ENCODE measurements at regions of chr12 and their contacts with region 1.

Region 1: GRCh38 chr12:75480469-75480949 is at the start of gene GLIPR1:
- DNase-seq: peak; percentile 72
- ATAC-seq: peak; percentile 85
- H3K4me3 ChIP-seq: peak within 1 kb of the TSS; percentile 83
- H3K27ac ChIP-seq: peak within 1 kb of the TSS; percentile 88
- H3K4me1 ChIP-seq: peaks cover 28% of the 10 kb centered on the region
- H3K27me3 ChIP-seq: no peaks in the 10 kb centered on the region
- CTCF ChIP-seq: no peak
- EP300 ChIP-seq: no peak; a peak in 1 of 4 replicates
- POLR2A ChIP-seq: peak; percentile 91
- RAD21 ChIP-seq: no peak
- polyA plus RNA-seq, gene GLIPR1: 39.8 to 62.6 TPM

Region 2: DNA sequence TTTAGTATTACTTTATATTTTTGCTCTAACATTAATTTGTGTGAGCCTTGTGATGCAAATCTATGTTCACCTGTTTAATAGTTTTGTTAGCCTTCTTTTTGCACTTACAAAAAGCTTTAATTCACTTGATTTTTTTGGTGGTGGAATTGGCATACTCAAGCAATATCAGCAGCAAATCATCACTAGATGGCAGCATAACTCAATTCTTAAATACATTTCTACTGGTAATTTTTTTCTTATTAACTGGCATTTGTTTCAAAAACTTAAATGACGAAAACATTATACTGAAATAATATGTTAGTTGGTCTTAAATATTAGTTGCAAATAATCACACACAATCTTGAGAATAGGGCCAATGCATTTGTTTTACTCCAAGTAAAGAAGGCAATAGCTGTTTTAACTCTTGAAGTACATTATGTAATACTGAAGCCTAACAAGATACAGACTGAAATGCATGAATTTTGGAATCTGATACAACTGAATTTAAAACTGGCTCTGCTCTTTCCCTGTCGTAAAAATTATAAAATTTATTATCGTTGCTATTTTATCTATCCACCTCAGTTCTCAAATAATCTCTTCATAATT is 791.3 kb before region 1 on chr12:
- CTCF ChIA-PET with region 1: interaction called, 7 read pairs
- POLR2A ChIA-PET with region 1: no interaction called
- RAD21 ChIA-PET with region 1: no interaction called
- SMC1A ChIA-PET with region 1: no interaction called
- in situ Hi-C with region 1: loop called (anchors 25 kb)
- intact Hi-C with region 1: no loop called
- DNase-seq: no peak
- ATAC-seq: peak; percentile 65; the same call in 2 of the 3 replicates
- H3K4me3 ChIP-seq: no peak overlapping the region
- H3K27ac ChIP-seq: no peak overlapping the region
- H3K4me1 ChIP-seq: no peaks in the 10 kb centered on the region
- H3K27me3 ChIP-seq: no peaks in the 10 kb centered on the region
- CTCF ChIP-seq: peak in 2 of 3 experiments; percentile 52 to 55; a peak in 3 of 6 replicates
- EP300 ChIP-seq: no peak
- POLR2A ChIP-seq: no peak
- RAD21 ChIP-seq: peak; percentile 52

Region 3: GRCh38 chr12:75390899-75391538 is 89.5 kb before region 1 on chr12 and contains the start of gene GLIPR1L2:
- CTCF ChIA-PET with region 1: interaction called, 58 read pairs
- POLR2A ChIA-PET with region 1: interaction called, 6 read pairs
- RAD21 ChIA-PET with region 1: interaction called, 56 read pairs
- SMC1A ChIA-PET with region 1: interaction called, 33 read pairs
- in situ Hi-C with region 1: no loop called
- intact Hi-C with region 1: loop called (anchors 1 kb)
- DNase-seq: peak; percentile 86
- ATAC-seq: peak; percentile 98
- H3K4me3 ChIP-seq: peak within 1 kb of the TSS; percentile 62
- H3K27ac ChIP-seq: peak within 1 kb of the TSS; percentile 91
- H3K4me1 ChIP-seq: peaks cover 7% of the 10 kb centered on the region
- H3K27me3 ChIP-seq: no peaks in the 10 kb centered on the region
- CTCF ChIP-seq: peak; percentile 79 to 91 (median 90)
- EP300 ChIP-seq: no peak
- POLR2A ChIP-seq: peak; percentile 76
- RAD21 ChIP-seq: peak; percentile 57
- polyA plus RNA-seq, gene GLIPR1L2: 0.04 TPM in 1 of 2 experiments, not detected in the other

Region 4: GRCh38 chr12:75505706-75506312 is 25.3 kb after region 1 on chr12:
- CTCF ChIA-PET with region 1: interaction called, 235 read pairs
- POLR2A ChIA-PET with region 1: interaction called, 11 read pairs
- RAD21 ChIA-PET with region 1: interaction called, 35 read pairs
- SMC1A ChIA-PET with region 1: interaction called, 151 read pairs
- in situ Hi-C with region 1: no loop called
- intact Hi-C with region 1: no loop called
- DNase-seq: no peak
- ATAC-seq: peak; percentile 50
- H3K4me3 ChIP-seq: no peak overlapping the region
- H3K27ac ChIP-seq: no peak overlapping the region
- H3K4me1 ChIP-seq: no peaks in the 10 kb centered on the region; the same call in 1 of the 2 replicates
- H3K27me3 ChIP-seq: no peaks in the 10 kb centered on the region
- CTCF ChIP-seq: peak; percentile 55 to 69 (median 63); a peak in 5 of 6 replicates
- EP300 ChIP-seq: no peak
- POLR2A ChIP-seq: no peak
- RAD21 ChIP-seq: peak; percentile 56

Region 5: GRCh38 chr12:75603475-75603874 is 123.0 kb after region 1 on chr12:
- CTCF ChIA-PET with region 1: no interaction called
- POLR2A ChIA-PET with region 1: no interaction called
- RAD21 ChIA-PET with region 1: no interaction called
- SMC1A ChIA-PET with region 1: no interaction called
- in situ Hi-C with region 1: no loop called
- intact Hi-C with region 1: no loop called
- DNase-seq: no peak
- ATAC-seq: no peak
- H3K4me3 ChIP-seq: no peak overlapping the region
- H3K27ac ChIP-seq: no peak overlapping the region
- H3K4me1 ChIP-seq: no peaks in the 10 kb centered on the region
- H3K27me3 ChIP-seq: no peaks in the 10 kb centered on the region
- CTCF ChIP-seq: no peak
- EP300 ChIP-seq: no peak
- POLR2A ChIP-seq: no peak
- RAD21 ChIP-seq: no peak

Region 6: DNA sequence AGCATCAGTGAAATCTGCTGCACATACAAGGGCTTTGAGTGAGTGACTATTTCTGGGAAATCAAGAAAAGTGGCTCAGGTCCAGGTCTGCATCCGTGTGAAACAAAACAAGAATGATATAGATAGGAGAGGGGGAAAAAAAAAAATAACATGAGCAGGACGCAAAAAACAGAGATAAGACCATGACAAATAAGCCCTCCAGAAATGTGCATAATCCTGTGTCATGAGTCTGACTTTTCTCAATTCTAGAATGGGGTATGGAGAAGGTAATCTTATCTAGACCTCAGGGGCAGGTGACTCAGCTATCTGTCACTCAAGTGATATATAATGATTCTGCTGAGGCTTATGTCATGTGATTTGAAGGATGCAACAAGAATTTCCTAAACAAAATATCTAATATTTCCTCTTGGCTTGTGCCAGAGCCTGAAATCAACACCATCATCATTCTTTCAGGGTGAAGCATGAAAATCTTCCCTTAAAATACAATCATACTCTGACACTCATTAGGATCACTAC is 301.1 kb after region 1 on chr12:
- CTCF ChIA-PET with region 1: no interaction called
- POLR2A ChIA-PET with region 1: no interaction called
- RAD21 ChIA-PET with region 1: no interaction called
- SMC1A ChIA-PET with region 1: no interaction called
- in situ Hi-C with region 1: no loop called
- intact Hi-C with region 1: no loop called
- DNase-seq: no peak
- ATAC-seq: no peak
- H3K4me3 ChIP-seq: no peak overlapping the region
- H3K27ac ChIP-seq: no peak overlapping the region
- H3K4me1 ChIP-seq: no peaks in the 10 kb centered on the region
- H3K27me3 ChIP-seq: no peaks in the 10 kb centered on the region
- CTCF ChIP-seq: no peak
- EP300 ChIP-seq: no peak
- POLR2A ChIP-seq: no peak
- RAD21 ChIP-seq: no peak

Region 7: GRCh38 chr12:75814851-75815754 is 334.6 kb after region 1 on chr12:
- CTCF ChIA-PET with region 1: interaction called, 11 read pairs
- POLR2A ChIA-PET with region 1: no interaction called
- RAD21 ChIA-PET with region 1: no interaction called
- SMC1A ChIA-PET with region 1: no interaction called
- in situ Hi-C with region 1: no loop called
- intact Hi-C with region 1: no loop called
- DNase-seq: no peak
- ATAC-seq: peak; percentile 74
- H3K4me3 ChIP-seq: no peak overlapping the region
- H3K27ac ChIP-seq: no peak overlapping the region
- H3K4me1 ChIP-seq: peaks cover 4% of the 10 kb centered on the region; the same call in 1 of the 2 replicates
- H3K27me3 ChIP-seq: no peaks in the 10 kb centered on the region
- CTCF ChIP-seq: no peak
- EP300 ChIP-seq: no peak
- POLR2A ChIP-seq: no peak
- RAD21 ChIP-seq: no peak

Region 8: GRCh38 chr12:76348079-76348901 is 867.8 kb after region 1 on chr12 and contains the start of gene BBS10:
- CTCF ChIA-PET with region 1: interaction called, 14 read pairs
- POLR2A ChIA-PET with region 1: no interaction called
- RAD21 ChIA-PET with region 1: interaction called, 7 read pairs
- SMC1A ChIA-PET with region 1: no interaction called
- in situ Hi-C with region 1: no loop called
- intact Hi-C with region 1: no loop called
- DNase-seq: peak; percentile 70
- ATAC-seq: peak; percentile 99
- H3K4me3 ChIP-seq: peak within 1 kb of the TSS; percentile 84
- H3K27ac ChIP-seq: peak within 1 kb of the TSS; percentile 83
- H3K4me1 ChIP-seq: peaks cover 7% of the 10 kb centered on the region; the same call in 1 of the 2 replicates
- H3K27me3 ChIP-seq: no peaks in the 10 kb centered on the region
- CTCF ChIP-seq: peak in 2 of 3 experiments; percentile 22 to 39; a peak in 3 of 6 replicates
- EP300 ChIP-seq: no peak
- POLR2A ChIP-seq: peak; percentile 93
- RAD21 ChIP-seq: 0 out of 2 replicates have a peak, but pooled peaks have one; percentile 7
- polyA plus RNA-seq, gene BBS10: 1.2 to 1.5 TPM

Region 9: GRCh38 chr12:76586764-76587395 is 1106.4 kb after region 1 on chr12:
- CTCF ChIA-PET with region 1: interaction called, 10 read pairs
- POLR2A ChIA-PET with region 1: no interaction called
- RAD21 ChIA-PET with region 1: interaction called, 3 read pairs
- SMC1A ChIA-PET with region 1: interaction called, 6 read pairs
- in situ Hi-C with region 1: no loop called
- intact Hi-C with region 1: no loop called
- DNase-seq: no peak
- ATAC-seq: peak; percentile 82
- H3K4me3 ChIP-seq: no peak overlapping the region
- H3K27ac ChIP-seq: no peak overlapping the region
- H3K4me1 ChIP-seq: no peaks in the 10 kb centered on the region
- H3K27me3 ChIP-seq: no peaks in the 10 kb centered on the region
- CTCF ChIP-seq: peak; percentile 54 to 69 (median 68); a peak in 5 of 6 replicates
- EP300 ChIP-seq: no peak
- POLR2A ChIP-seq: no peak
- RAD21 ChIP-seq: peak; percentile 85

Measured in GM12878 (cell line).